ENCODE measurements at regions of chr16 and their contacts with region 1.

Region 1: DNA sequence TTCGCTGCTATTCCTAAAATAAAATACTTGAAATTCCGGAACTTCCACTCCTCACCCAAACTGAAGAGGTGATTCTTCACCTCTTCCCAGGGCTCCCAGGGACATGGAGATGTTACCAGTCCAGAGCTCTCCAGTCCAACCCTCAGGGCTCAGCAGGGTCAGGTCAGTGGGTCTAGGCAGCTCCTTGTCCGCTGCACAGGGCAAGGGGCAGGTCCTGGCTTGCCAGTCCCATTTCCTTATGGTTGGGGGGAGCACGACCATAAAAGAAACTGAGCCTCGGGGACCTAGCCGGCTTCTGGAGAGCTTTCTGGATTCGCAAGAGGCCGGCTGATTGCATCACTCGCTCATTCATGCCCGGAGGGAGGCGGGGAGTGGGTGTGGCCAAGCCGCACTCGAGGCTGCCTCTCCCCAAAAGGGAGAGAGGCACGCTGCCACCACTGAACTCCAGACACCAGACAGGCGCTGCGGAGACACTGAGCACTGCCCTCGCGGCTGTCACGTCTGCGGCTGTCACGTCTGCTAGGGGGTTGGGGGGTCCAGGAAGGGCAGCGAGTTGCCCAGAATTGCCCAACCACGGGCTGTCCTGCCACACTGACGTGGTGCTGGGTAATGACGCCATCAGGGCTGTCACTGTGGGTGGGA is 15.8 kb downstream of the SLC7A5 start:
- H3K4me3 ChIP-seq: peak overlapping the region; percentile 9
- H3K27ac ChIP-seq: peak overlapping the region; percentile 84
- H3K4me1 ChIP-seq: peaks cover 8% of the 10 kb centered on the region
- CTCF ChIP-seq: no peak

Region 2: DNA sequence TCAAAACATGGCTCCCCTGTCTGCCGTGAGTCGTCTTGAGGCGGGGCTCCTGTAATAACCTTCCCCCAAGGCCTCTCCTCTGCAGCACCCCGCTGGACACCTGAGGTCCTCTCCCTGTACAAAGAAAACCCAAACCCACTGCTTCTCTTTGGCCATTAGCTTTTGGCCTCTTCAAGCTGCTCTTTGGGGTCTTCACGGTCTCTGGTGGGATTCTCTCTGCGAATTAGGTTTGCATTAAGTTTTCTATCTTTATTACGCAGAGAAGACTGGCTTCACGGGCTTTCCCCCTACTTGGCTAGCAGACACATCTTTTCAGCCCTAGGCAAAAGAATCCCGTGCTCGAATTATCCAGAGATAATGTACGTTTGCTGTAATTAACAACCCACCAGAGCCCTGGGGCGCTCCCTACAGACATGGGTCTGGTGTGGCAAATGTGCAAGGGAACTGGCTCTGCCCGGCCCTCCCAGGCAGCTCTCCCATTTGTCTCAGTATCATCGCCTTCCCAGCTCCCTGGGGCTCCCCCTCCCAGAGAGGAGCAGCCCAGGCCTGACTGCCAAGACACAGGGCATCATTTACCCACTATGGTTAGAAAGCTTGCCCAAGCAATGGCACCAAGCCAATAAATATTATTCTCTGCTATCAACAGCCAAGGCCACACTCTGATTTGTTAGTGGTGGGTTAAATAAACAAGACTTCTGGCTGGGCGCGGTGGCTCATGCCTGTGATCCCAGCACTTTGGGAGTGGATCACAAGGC is 63.1 kb before region 1 on chr16:
- CTCF ChIA-PET with region 1: interaction called, 10 read pairs
- POLR2A ChIA-PET with region 1: no interaction called
- H3K4me3 ChIP-seq: no peak overlapping the region
- H3K27ac ChIP-seq: no peak overlapping the region
- H3K4me1 ChIP-seq: no peaks in the 10 kb centered on the region
- CTCF ChIP-seq: no peak

Region 3: DNA sequence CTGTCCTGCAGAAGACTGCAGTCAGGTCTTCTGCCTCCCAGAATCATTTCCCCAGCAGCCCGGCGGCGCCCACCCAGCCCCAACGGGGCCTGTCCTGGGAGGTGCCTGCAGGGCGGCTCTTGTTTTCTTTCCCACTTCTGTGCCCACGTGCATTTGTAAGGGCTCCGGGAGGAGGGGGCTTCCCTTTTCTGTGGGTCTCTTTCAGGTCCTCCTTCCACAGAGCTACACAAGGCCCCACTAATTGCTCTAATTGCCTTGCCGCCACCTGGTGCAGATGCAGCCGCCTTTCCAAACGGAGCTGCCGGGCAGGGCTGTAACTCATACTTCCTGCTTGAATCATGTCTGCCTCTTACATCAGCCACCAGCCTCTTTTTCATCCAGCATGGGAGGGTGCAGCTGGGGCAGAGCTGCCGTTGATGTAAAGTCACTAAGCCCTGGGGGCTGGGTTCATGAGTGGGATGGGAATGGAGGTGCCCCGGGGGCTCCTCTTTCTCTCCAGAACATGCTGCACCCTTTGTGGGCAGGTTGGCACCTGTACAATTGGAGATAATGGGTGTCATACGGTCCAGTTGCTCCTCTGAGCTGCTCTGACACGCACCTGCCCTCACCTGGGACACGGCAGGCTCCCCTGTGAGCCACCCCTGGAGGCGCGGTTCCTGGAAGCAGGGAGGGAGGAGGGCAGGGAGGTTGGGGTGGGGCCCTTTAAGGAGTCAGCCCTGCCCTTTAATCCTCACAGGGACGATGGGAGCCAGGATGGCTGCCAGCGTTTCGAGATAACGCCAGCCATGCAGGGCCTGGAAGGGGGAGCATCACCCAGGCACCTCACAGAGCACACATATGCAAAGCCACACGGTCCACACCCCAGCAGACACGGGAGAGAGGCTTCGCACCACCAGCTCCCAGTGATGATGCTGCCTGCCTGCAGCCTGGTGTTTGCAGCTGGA is 46.7 kb before region 1 on chr16:
- CTCF ChIA-PET with region 1: interaction called, 19 read pairs
- POLR2A ChIA-PET with region 1: interaction called, 4 read pairs
- H3K4me3 ChIP-seq: peak overlapping the region; percentile 12; the same call in 1 of the 2 replicates
- H3K27ac ChIP-seq: peak overlapping the region; percentile 28; the same call in 1 of the 2 replicates
- H3K4me1 ChIP-seq: peaks cover 4% of the 10 kb centered on the region; the same call in 1 of the 2 replicates
- CTCF ChIP-seq: no peak

Region 4: GRCh38 chr16:87836844-87837581 is 16.5 kb before region 1 on chr16:
- CTCF ChIA-PET with region 1: interaction called, 12 read pairs
- POLR2A ChIA-PET with region 1: no interaction called
- H3K4me3 ChIP-seq: no peak overlapping the region
- H3K27ac ChIP-seq: no peak overlapping the region
- H3K4me1 ChIP-seq: no peaks in the 10 kb centered on the region
- CTCF ChIP-seq: no peak

Region 5: DNA sequence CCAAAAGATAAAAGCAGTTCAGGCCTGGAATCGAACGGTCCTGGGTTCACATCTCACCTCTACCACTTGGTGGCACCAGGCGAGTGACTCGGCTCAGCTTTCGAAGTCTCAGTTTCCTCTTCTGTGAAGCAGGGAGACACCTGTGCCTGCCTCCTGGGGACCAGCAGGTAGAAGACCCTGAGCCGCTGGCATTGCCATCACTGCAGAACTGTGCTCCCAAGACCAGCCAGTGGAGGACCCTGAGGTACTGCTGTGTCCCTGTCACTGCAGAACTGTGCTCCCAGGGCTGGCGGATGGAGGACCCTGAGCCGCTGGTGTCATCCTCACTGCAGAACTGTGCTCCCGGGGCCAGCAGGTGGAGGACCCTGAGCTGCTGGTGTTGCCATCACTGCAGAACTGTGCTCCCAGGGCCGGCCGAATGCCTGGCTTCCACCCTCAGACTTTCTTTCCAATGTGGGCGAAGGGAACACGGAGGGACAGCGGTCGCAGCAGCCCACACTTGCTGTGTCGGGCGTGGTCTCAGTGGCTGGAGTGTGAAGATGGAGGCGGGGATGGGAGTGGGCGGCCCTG is 24.5 kb after region 1 on chr16:
- CTCF ChIA-PET with region 1: interaction called, 32 read pairs
- POLR2A ChIA-PET with region 1: no interaction called
- H3K4me3 ChIP-seq: no peak overlapping the region
- H3K27ac ChIP-seq: no peak overlapping the region
- H3K4me1 ChIP-seq: no peaks in the 10 kb centered on the region
- CTCF ChIP-seq: no peak